Dorsolateral prefrontal cortex (tissue), 120 donors: ENCODE measurements at regions of chr6 and their contacts with region 1.

Region 1: GRCh38 chr6:163413345-163414116 is 987 bp upstream of the QKI start:
- DNase-seq: peak; percentile 78 to 90 (median 83)
- H3K4me3 ChIP-seq: peak overlapping the region; percentile 54 to 97 (median 79)
- H3K27ac ChIP-seq: peak overlapping the region; percentile 91 to 100 (median 99)
- H3K27me3 ChIP-seq: no peaks in the 10 kb centered on the region
- CTCF ChIP-seq: peak in 29 of 56 donors; percentile 7 to 49 (median 23)

Region 2: GRCh38 chr6:163180874-163181541 is 232.5 kb before region 1 on chr6:
- intact Hi-C with region 1: loop called (anchors 1 to 2 kb)
- DNase-seq: peak; percentile 36 to 96 (median 92)
- H3K4me3 ChIP-seq: peak overlapping the region in 36 of 59 donors; percentile 4 to 54 (median 36)
- H3K27ac ChIP-seq: peak overlapping the region in 58 of 59 donors; percentile 72 to 100 (median 97)
- H3K27me3 ChIP-seq: no peaks in the 10 kb centered on the region
- CTCF ChIP-seq: peak; percentile 68 to 96 (median 86)

Region 3: DNA sequence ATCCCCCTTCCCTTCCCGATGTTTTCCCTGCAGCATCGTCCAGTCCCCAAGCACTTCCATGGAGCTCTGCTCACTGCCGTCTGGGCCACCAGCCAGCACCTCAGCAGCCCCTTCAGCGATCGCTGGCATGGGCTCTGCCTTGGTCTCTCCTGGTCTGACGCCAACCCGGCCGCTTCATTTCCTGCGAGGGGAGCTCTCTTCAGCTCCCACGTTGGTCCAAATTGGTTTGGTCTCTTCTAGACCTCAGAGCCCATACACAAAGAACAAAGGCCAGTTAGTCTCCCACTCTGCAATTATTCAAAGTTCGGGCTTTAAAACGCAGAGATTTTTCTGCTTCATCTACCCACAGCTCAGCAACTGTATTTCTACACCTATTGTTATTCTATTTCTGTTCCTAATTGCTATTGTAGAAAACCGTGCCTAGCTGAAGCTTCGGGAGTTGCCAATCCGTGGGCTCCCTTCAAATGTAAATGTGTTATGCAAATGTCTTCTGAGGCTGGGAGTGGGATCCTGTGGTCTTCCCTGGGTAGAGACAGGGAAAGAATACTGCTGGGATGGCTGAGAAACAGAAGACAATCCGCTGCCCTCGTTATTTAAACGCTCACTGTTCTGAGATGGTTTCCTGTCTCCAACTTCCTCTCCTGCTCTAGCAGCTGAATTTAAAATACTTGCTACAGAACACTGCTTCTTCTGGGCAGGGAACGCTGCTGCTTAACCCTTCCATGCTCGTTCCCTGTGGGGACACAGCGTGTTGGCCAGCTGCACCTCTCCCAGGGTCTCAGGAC is 153.2 kb before region 1 on chr6:
- intact Hi-C with region 1: loop called (anchors 2 kb)
- DNase-seq: peak in 5 of 10 donors; percentile 35 to 82 (median 70)
- H3K4me3 ChIP-seq: peak overlapping the region in 57 of 59 donors; percentile 1 to 66 (median 37)
- H3K27ac ChIP-seq: peak overlapping the region; percentile 86 to 100 (median 98)
- H3K27me3 ChIP-seq: no peaks in the 10 kb centered on the region
- CTCF ChIP-seq: peak in 1 of 56 donors; percentile 0

Region 4: DNA sequence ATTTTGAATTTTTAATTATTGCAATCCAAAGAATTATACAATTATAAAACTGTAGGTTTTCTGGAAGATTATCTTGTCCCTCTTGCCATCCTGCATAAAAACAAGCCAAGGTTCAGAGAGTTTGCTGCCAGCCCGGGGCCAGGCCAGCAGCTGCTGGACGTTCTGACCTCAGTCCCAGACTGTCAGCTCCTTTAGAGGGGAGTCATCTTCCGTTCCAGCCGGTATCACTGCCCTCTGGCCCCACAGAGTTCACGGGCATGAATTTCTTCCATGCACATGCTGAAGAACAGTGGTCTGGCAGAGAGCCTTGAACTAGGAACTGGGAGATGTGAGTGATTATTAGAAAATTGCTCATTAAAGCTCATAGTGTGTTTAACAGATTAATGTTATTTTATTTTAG is 129.4 kb before region 1 on chr6:
- intact Hi-C with region 1: no loop called
- DNase-seq: no peak
- H3K4me3 ChIP-seq: no peak overlapping the region
- H3K27ac ChIP-seq: peak overlapping the region in 58 of 59 donors; percentile 65 to 98 (median 90)
- H3K27me3 ChIP-seq: no peaks in the 10 kb centered on the region
- CTCF ChIP-seq: no peak

Region 5: DNA sequence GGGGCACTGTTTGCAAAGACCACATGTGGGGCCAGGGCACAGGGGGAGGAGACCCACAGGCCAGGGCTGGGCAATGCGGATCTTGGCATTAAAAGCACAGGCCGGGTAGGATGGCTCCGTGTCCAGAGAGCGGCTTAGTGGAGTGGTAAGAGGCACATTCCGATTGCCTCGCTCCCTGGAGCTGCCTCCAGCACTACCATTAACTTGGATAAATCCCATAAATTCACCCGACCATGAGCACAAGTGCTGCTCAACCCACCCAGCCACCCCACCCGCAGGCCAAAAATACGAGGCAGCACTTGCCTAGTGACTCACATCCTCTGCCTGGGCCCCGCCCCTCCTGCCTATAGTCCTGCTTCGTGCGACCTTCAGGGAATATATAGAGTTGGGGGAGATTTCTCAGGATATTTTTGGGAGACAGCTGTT is 66.5 kb before region 1 on chr6:
- intact Hi-C with region 1: loop called (anchors 2 kb)
- DNase-seq: no peak
- H3K4me3 ChIP-seq: peak overlapping the region in 13 of 59 donors; percentile 11 to 51 (median 37)
- H3K27ac ChIP-seq: peak overlapping the region; percentile 89 to 100 (median 97)
- H3K27me3 ChIP-seq: no peaks in the 10 kb centered on the region
- CTCF ChIP-seq: no peak

Region 6: DNA sequence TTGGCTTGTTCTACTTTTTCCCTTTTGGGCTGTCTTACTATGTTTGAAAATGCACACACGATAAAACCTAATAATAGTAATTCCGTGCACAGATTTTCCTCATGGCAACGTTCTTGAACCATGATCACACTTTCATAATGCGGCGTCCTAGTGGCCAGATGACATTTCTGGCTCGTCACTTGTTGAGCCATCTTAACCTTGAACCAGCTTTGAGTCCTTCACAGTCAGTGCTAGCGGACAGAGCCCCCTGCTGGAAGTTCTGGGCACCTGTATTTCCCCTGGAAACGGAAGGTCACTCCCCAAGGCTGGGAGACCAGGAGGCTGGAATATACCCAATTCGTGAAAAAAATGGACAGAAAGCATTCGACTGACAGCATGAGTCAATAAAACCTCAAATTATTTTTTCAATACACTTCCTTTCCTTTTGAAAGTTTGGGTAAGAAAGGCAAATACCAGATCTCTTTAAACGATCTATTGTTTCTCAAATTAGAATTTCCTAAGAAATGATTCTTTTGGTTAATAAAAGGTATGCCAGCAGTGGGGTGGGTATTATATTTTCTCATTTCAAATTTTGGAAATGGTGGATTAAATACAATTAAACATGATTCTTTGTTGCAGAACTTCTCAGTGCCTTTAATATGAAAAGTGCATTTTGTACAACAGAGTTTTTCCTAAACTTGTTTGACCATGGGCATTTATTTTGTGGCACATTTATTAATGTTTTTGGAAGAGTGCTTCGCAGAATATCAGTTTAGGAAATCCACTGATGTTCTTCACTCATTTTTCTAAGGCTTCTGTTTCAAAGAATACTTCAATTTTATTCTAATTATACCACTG is 543.3 kb after region 1 on chr6:
- intact Hi-C with region 1: loop called (anchors 5 to 10 kb)
- DNase-seq: peak; percentile 25 to 83 (median 74)
- H3K4me3 ChIP-seq: peak overlapping the region in 18 of 59 donors; percentile 1 to 45 (median 20)
- H3K27ac ChIP-seq: peak overlapping the region in 9 of 59 donors; percentile 0 to 35 (median 14)
- H3K27me3 ChIP-seq: no peaks in the 10 kb centered on the region
- CTCF ChIP-seq: peak; percentile 52 to 96 (median 89)

Region 7: DNA sequence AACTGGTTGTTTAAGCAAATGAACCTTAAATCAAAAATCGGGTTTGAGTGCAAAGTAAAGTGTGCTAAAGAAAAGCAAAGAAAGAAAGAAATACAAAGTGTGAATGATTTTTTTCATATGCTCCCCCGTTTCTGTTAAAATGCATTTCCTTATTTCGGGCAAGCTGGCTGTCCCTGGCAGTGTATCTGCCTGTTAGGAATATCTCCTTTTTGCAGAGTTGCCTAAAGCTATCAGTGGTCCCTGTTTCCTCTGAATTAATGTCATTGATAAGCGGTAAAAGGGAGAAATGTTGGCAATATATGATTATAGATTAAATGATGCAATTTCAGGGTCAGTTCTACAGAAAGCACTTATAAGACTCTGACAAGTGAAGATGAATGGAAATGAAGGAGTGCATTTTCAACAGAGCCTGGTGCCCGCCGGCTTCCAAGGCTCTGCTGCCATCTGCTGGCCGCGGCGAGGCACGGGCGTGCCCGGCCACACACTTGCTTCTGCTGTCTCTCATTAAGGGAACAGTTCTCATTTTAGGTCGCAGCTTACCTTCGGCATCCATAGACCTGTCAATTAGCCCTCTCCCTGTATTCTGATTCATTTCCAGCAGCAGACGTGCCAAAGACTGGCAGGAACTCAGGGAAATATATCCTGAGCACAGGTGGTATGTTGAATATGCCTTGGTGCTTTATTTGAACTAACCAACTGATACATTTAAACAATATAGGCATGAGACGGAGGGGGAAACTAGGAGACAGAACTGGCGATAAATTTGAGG is 1513.9 kb after region 1 on chr6:
- intact Hi-C with region 1: loop called in 1 of 2 experiments (anchors 5 kb)
- DNase-seq: peak; percentile 78 to 91 (median 86)
- H3K4me3 ChIP-seq: peak overlapping the region; percentile 39 to 80 (median 60)
- H3K27ac ChIP-seq: peak overlapping the region in 58 of 59 donors; percentile 11 to 92 (median 78)
- H3K27me3 ChIP-seq: no peaks in the 10 kb centered on the region
- CTCF ChIP-seq: peak; percentile 89 to 99 (median 98)